ENCODE measurements at regions of chr13 and their contacts with region 1.

Region 1: DNA sequence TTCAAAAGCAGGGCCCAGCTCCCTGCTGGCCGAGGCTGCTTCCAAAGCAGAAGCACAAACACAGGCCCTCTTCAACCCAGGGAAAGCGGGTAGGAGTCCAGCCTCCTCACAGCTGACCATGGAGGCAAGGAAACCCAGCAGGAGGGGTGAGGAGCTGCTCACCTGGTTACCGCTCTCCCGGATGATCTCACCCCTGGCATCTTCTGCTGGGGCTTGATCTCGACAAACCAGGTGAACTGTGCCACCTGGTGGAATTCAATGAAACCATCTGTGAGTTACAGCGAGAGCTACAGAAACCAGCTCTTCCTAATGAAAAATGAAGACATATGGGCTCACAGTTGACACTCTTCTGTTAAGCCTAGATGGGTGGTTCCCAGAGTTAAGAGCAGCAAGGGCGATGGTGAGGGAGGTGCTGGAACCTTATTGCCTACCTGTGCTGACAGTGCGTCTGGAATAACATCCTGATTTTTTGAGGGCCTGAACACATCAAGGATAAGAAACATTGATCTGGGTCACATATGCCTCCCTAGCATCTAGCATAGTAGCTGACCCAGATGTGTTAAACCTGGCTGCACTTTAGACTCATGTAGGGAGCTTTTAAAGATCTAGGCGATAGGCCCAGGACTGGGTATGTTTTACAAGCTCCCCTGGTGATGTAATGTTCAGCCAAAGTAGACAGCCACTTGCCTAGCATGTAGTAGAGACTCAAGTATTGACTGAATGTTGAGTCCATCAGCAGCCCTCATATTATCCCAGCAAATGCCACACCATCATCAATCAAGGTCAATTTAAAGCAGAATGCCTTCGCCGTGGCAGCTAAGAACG is 6.1 kb downstream of the DHRS12 start:
- DNase-seq: peak; percentile 83
- H3K4me3 Mint-ChIP-seq: no peak overlapping the region
- H3K27ac Mint-ChIP-seq: no peak overlapping the region
- H3K4me1 Mint-ChIP-seq: peaks cover 43% of the 10 kb centered on the region
- H3K27me3 Mint-ChIP-seq: no peaks in the 10 kb centered on the region

Region 2: GRCh38 chr13:51125498-51126226 is 672.2 kb before region 1 on chr13:
- CTCF ChIA-PET with region 1: interaction called, 51 read pairs
- intact Hi-C with region 1: loop called (anchors 1 kb)
- DNase-seq: peak; percentile 67
- H3K4me3 Mint-ChIP-seq: no peak overlapping the region
- H3K27ac Mint-ChIP-seq: no peak overlapping the region
- H3K4me1 Mint-ChIP-seq: peaks cover 5% of the 10 kb centered on the region
- H3K27me3 Mint-ChIP-seq: peaks cover 8% of the 10 kb centered on the region

Region 3: DNA sequence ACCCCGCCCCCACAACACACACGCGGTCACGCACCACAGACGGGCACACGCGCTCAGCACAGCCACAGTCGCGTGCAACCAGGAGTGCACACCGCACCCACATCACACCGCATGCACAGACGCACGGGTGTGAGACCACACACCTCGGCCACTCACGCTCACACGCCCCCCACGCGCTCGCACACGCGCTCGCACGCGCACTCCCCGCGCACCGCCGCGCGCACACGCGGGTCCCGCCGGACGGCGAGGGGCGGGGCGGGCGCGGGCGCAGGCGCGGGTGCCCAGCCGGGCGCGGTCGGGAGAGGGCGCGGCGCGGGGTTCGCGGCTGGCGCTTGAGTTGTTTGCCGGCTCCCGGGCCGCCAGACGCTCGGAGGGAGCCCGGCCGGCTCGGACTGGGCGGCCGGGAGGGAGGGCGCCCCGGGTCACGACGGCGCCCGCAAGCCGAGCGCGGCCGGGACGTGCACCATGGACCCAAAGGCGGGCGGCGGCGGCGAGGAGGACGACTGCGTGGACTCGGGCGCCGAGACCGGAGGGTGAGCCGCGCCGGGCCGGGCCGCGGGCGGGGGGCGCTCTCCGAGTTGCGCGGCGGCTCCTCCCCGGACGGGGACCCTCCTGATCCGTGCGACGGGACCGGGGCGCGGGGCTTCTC is 575.7 kb before region 1 on chr13 and contains the start of gene FAM124A:
- CTCF ChIA-PET with region 1: interaction called, 4 read pairs
- intact Hi-C with region 1: loop called (anchors 2 kb)
- DNase-seq: peak; percentile 49
- H3K4me3 Mint-ChIP-seq: peak within 1 kb of the TSS; percentile 73
- H3K27ac Mint-ChIP-seq: no peak within 1 kb of the TSS
- H3K4me1 Mint-ChIP-seq: no peaks in the 10 kb centered on the region
- H3K27me3 Mint-ChIP-seq: peaks cover 39% of the 10 kb centered on the region
- total RNA-seq, gene FAM124A: not detected

Region 4: GRCh38 chr13:51435002-51435578 is 362.8 kb before region 1 on chr13:
- CTCF ChIA-PET with region 1: interaction called, 52 read pairs
- intact Hi-C with region 1: loop called (anchors 1 kb)
- DNase-seq: no peak
- H3K4me3 Mint-ChIP-seq: no peak overlapping the region
- H3K27ac Mint-ChIP-seq: no peak overlapping the region
- H3K4me1 Mint-ChIP-seq: peaks cover 14% of the 10 kb centered on the region
- H3K27me3 Mint-ChIP-seq: no peaks in the 10 kb centered on the region

Region 5: GRCh38 chr13:51502153-51502651 is 295.7 kb before region 1 on chr13:
- CTCF ChIA-PET with region 1: interaction called, 8 read pairs
- intact Hi-C with region 1: loop called (anchors 1 kb)
- DNase-seq: peak; percentile 66
- H3K4me3 Mint-ChIP-seq: no peak overlapping the region
- H3K27ac Mint-ChIP-seq: no peak overlapping the region
- H3K4me1 Mint-ChIP-seq: peaks cover 23% of the 10 kb centered on the region
- H3K27me3 Mint-ChIP-seq: no peaks in the 10 kb centered on the region

Region 6: DNA sequence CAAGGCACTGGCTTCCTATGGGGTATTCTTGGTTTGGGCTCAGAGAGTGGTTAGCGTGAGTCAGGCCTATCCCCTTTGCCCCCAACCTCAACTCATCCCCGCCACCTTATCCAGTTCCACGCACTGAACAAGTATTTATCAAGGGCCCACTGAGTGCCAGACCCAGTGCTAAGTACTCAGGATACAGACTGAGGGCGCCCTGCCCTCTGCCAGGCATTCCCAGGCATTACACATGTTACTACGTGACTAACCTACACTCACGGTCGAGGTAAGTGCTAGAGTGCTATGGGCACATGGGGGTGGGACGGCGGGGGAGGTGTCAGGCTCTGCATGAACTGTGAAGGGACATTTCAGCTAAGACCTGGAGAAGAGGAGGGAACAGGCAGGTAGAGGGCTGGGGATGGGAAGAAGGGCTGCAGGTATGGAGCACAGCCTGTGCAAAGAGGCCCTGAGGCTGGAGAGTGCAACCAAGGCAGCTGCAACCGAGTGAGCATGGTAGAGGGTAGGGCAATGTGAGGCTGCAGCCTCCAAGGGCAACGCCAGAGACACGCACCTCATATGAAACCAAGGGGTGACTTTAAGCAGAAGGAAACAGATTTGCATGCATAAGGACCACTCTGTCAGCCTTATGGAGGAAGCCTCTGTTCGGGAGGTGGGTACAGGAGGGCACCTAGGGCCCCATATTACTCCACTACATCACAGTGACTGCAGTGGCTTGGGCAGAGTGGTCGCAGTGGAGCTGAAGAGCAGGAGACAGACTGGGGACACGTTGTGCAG is 16.4 kb before region 1 on chr13:
- CTCF ChIA-PET with region 1: interaction called, 10 read pairs
- intact Hi-C with region 1: no loop called
- DNase-seq: peak; percentile 30
- H3K4me3 Mint-ChIP-seq: no peak overlapping the region
- H3K27ac Mint-ChIP-seq: no peak overlapping the region
- H3K4me1 Mint-ChIP-seq: no peaks in the 10 kb centered on the region
- H3K27me3 Mint-ChIP-seq: no peaks in the 10 kb centered on the region

Region 7: GRCh38 chr13:51825165-51825592 is 27.3 kb after region 1 on chr13:
- CTCF ChIA-PET with region 1: interaction called, 14 read pairs
- intact Hi-C with region 1: loop called (anchors 1 kb)
- DNase-seq: no peak
- H3K4me3 Mint-ChIP-seq: peak overlapping the region; percentile 77
- H3K27ac Mint-ChIP-seq: peak overlapping the region; percentile 98
- H3K4me1 Mint-ChIP-seq: peaks cover 84% of the 10 kb centered on the region
- H3K27me3 Mint-ChIP-seq: no peaks in the 10 kb centered on the region

Measured in activated naive CD4-positive, alpha-beta T cell treated with anti-CD3 and anti-CD28 coated beads for 36 hours (primary cell).